Left ventricle myocardium inferior (tissue), 1 donor: ENCODE measurements at regions of chr9 and their contacts with region 1.

Region 1: GRCh38 chr9:94213511-94214124 is 45.5 kb upstream of the ZNF169 start:
- DNase-seq: peak; percentile 42
- H3K4me3 ChIP-seq: no peak overlapping the region
- H3K27ac ChIP-seq: no peak overlapping the region
- H3K4me1 ChIP-seq: peaks cover 3% of the 10 kb centered on the region
- H3K27me3 ChIP-seq: peaks cover 6% of the 10 kb centered on the region
- CTCF ChIP-seq: peak; percentile 89

Region 2: DNA sequence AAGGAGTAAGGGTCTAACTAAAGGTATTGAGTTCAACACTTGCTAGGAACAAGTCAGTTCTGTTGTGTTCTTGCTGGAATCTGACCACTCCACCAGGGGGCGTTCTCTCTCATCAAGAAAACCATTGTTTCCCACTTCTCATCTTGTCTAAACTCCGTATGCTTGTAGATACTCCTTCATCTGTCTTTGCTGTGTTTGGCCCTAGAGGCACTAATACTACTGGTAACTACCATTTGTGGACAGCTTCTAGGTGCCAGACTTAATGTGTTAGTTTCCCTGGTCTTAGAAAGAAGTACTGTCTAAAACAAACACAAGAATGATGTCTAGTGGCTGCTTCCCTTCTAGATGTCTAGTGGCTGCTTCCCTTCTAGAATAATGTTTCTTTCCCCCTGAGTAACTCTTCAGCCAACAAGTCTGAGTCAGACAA is 148.1 kb before region 1 on chr9:
- intact Hi-C with region 1: loop called (anchors 1 kb)
- DNase-seq: peak; percentile 60
- H3K4me3 ChIP-seq: no peak overlapping the region
- H3K27ac ChIP-seq: no peak overlapping the region
- H3K4me1 ChIP-seq: peaks cover 9% of the 10 kb centered on the region
- H3K27me3 ChIP-seq: no peaks in the 10 kb centered on the region
- CTCF ChIP-seq: peak; percentile 93

Region 3: GRCh38 chr9:94157050-94157764 is 56.4 kb before region 1 on chr9:
- intact Hi-C with region 1: no loop called
- DNase-seq: peak; percentile 77
- H3K4me3 ChIP-seq: peak overlapping the region; percentile 2
- H3K27ac ChIP-seq: peak overlapping the region; percentile 83
- H3K4me1 ChIP-seq: peaks cover 26% of the 10 kb centered on the region
- H3K27me3 ChIP-seq: no peaks in the 10 kb centered on the region
- CTCF ChIP-seq: no peak